GM23248 (cell line): ENCODE measurements at regions of chr1 and their contacts with region 1.

Region 1: GRCh38 chr1:151294742-151295462 is 12.8 kb downstream of the ZNF687 start:
- DNase-seq: no peak
- H3K4me3 ChIP-seq: no peak overlapping the region
- H3K27ac ChIP-seq: no peak overlapping the region
- H3K4me1 ChIP-seq: no peaks in the 10 kb centered on the region
- H3K27me3 ChIP-seq: no peaks in the 10 kb centered on the region

Region 2: DNA sequence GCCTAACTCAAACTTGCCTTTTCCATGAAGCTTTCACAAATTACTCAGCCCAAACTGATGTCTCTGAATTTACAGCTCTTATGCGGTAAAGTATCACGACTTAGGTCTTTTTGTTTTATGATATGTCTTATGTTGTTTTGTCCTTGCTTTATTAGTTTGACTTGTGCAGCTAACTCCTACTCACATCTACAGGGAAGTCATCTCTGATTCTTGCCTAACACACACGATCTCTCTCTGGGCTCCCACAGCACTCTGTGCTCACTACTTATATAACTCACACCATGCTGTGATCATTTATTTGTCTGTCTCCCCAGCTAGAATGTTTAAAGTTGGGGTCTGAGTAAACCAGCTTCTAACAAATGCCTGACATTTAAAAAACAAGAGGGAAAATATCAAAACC is 41.7 kb after region 1 on chr1:
- in situ Hi-C with region 1: loop called (anchors 5 kb)
- DNase-seq: no peak
- H3K4me3 ChIP-seq: no peak overlapping the region
- H3K27ac ChIP-seq: no peak overlapping the region
- H3K4me1 ChIP-seq: no peaks in the 10 kb centered on the region
- H3K27me3 ChIP-seq: no peaks in the 10 kb centered on the region